ENCODE measurements at regions of chrX and their contacts with region 1.

Region 1: DNA sequence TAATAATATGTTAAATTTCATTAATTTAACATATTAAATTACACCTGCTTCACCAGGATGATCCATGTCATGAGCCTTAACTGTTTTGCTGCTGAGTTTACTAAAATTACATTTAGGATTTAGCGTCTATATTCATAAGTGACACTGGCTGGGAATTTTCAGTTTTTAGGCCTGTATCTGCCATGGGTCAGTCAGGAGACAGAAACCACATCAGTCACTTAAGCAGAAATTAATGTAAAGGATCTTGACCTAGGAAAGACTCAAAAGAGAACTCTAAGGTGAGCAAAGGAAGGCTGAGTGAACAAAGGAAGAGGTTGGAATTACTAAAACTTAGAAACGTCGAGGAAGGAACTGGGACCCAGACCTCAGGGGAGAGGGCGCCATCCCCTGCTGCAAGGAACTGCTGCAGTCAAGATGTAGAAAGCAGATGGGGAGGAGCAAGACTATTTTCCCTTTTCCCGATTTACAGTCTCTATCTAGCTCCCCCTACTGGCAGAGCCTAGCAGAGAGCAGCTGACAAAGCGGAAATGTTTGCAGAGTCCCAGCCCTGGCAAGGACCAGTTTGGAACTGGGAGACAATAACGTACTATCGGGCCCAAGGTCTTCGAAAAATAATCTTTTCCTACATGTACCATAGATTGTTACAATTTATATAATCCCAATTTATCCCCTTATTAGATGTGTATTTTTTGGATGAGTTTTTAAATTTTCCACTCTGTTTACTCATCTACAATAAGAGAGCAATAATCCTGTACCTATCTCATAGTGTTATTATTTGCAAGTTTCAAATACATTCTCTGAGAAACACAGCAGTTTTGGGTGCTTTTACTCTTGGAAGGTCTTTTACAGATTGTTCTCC is 22.6 kb upstream of the RBBP7 start:
- DNase-seq: peak; percentile 45
- ATAC-seq: peak; percentile 87 to 88
- H3K4me3 ChIP-seq: no peak overlapping the region
- H3K27ac ChIP-seq: no peak overlapping the region
- H3K4me1 ChIP-seq: no peaks in the 10 kb centered on the region
- H3K27me3 ChIP-seq: no peaks in the 10 kb centered on the region
- CTCF ChIP-seq: peak; percentile 76

Region 2: DNA sequence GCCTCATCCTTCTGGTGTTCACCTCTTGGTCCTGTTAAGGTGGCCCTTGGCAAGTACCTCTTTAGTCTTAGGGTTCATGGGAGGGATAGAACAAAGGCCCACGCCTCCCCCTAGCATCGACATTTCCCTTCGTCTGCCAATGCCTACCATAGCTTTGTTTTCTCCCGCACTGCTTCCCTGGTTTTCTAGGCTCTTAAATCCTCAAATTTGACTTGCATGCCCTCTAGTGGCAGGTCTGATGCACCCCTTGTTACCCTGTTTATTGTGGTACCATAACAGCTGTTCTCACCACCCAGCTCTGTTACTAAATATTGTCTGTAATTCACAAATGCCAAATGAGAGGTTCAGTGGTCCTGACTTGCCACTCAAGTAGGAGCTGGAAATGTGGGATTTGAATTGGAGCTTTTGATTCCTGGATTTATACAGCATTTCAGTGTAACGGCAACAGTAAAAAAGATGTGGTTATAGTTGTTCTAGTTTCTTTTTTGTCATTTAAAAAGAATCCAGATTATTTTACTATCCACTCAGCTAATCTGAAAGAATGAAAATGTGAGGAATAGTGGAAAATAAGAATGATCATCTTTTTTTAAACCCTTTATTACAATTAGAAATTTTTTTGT is 153.9 kb after region 1 on chrX:
- intact Hi-C with region 1: loop called (anchors 10 kb)
- DNase-seq: no peak
- ATAC-seq: peak; percentile 83 to 93
- H3K4me3 ChIP-seq: no peak overlapping the region
- H3K27ac ChIP-seq: no peak overlapping the region
- H3K4me1 ChIP-seq: no peaks in the 10 kb centered on the region
- H3K27me3 ChIP-seq: no peaks in the 10 kb centered on the region
- CTCF ChIP-seq: peak; percentile 66